ENCODE measurements at regions of chr18 and their contacts with region 1.

Region 1: GRCh38 chr18:12376718-12377555 is at the start of gene AFG3L2:
- DNase-seq: peak; percentile 100
- ATAC-seq: peak; percentile 91
- H3K4me3 Mint-ChIP-seq: peak within 1 kb of the TSS; percentile 92
- H3K27ac Mint-ChIP-seq: peak within 1 kb of the TSS; percentile 88
- H3K4me1 Mint-ChIP-seq: peaks cover 43% of the 10 kb centered on the region
- H3K27me3 Mint-ChIP-seq: no peaks in the 10 kb centered on the region
- total RNA-seq, gene AFG3L2: 38.0 to 56.5 TPM

Region 2: DNA sequence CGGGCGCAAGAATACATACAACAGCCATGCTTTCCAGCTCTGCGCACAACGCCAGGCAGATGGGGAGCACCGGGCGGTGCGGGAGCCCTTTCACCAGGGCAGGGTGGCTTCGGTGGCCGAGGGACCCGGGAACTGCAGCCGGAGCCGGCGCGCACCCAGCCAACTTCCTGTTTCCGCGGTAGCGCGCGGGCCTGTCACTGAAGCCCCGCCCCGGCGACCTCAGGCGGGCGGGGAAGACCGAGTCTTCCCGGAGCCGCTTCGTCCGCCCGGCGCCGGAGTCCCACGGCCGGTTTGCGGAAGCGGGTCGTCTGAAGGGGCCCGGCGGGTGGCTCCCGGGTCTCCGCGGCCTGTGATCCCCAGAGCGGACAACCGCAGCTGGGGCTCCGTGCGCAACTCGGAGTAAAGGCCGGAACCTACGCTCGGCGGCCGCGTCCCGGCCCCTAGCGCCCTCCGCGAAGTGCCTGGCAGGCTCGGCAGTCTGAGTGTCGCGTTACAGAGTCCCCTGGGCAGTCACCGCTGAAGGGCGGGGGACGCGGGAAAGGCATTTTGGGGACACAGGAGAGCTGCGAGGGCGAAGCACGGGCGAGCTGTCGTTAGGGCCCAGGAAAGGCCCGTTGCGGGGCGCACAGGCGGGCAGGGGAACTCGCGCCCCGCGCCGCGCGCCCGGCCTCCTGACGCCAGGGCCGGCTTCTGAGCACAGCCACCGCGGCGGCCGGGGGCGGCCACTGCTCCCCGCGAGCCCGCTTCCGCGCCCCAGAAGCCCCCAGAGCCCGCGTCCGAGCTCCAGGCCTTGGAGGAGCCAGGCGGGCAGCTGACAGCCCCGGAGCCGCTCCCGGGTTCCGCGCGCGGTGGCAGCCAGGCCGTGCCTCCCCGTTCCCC is 468.5 kb before region 1 on chr18 and contains the start of gene MPPE1:
- CTCF ChIA-PET with region 1: no interaction called
- POLR2A ChIA-PET with region 1: no interaction called
- intact Hi-C with region 1: loop called in 1 of 2 experiments (anchors 1 kb)
- DNase-seq: peak; percentile 93
- ATAC-seq: peak; percentile 93
- H3K4me3 Mint-ChIP-seq: peak within 1 kb of the TSS; percentile 88
- H3K27ac Mint-ChIP-seq: peak within 1 kb of the TSS; percentile 94
- H3K4me1 Mint-ChIP-seq: peaks cover 18% of the 10 kb centered on the region
- H3K27me3 Mint-ChIP-seq: no peaks in the 10 kb centered on the region
- total RNA-seq, gene MPPE1: 22.4 to 29.6 TPM

Region 3: GRCh38 chr18:12254136-12254829 is 122.7 kb before region 1 on chr18 and contains the start of gene CIDEA:
- CTCF ChIA-PET with region 1: no interaction called
- POLR2A ChIA-PET with region 1: no interaction called
- intact Hi-C with region 1: no loop called
- DNase-seq: no peak
- ATAC-seq: no peak
- H3K4me3 Mint-ChIP-seq: no peak within 1 kb of the TSS
- H3K27ac Mint-ChIP-seq: no peak within 1 kb of the TSS
- H3K4me1 Mint-ChIP-seq: no peaks in the 10 kb centered on the region
- H3K27me3 Mint-ChIP-seq: peaks cover 51% of the 10 kb centered on the region
- total RNA-seq, gene CIDEA: not detected

Region 4: DNA sequence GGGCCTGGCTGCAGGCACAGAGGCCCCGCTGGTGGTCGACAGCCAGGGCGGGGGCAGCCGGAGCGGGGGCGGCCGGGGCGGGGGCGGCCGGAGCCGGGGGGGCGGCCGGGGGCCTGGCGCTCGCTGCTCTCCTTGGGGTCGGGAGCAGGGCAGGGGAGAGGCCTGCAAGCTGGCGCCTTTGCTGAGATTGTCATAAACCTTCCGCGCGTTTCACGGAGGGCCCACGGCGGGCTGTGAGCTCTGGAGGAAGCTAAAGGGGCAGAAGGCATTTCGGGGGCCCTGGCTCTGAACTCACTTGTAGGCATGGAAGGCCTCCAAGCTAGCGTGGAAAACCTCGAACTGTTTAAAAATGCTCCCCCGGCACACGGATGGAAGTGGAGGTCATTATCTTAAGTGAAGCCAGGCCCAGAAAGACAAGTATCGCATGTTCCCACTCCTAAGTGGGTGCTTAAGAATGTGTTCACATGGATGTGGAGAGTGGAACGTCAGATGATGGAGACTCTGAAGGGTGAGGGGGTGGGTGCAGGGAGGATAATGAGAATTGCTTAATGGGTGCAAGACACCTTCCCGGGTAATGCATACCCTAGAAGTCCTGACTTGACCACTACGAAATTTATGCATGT is 31.4 kb after region 1 on chr18:
- CTCF ChIA-PET with region 1: interaction called, 6 read pairs
- POLR2A ChIA-PET with region 1: interaction called, 3 read pairs
- intact Hi-C with region 1: loop called (anchors 1 to 2 kb)
- DNase-seq: peak; percentile 18
- ATAC-seq: no peak
- H3K4me3 Mint-ChIP-seq: peak overlapping the region; percentile 74
- H3K27ac Mint-ChIP-seq: peak overlapping the region; percentile 31
- H3K4me1 Mint-ChIP-seq: peaks cover 22% of the 10 kb centered on the region
- H3K27me3 Mint-ChIP-seq: peaks cover 29% of the 10 kb centered on the region

Region 5: DNA sequence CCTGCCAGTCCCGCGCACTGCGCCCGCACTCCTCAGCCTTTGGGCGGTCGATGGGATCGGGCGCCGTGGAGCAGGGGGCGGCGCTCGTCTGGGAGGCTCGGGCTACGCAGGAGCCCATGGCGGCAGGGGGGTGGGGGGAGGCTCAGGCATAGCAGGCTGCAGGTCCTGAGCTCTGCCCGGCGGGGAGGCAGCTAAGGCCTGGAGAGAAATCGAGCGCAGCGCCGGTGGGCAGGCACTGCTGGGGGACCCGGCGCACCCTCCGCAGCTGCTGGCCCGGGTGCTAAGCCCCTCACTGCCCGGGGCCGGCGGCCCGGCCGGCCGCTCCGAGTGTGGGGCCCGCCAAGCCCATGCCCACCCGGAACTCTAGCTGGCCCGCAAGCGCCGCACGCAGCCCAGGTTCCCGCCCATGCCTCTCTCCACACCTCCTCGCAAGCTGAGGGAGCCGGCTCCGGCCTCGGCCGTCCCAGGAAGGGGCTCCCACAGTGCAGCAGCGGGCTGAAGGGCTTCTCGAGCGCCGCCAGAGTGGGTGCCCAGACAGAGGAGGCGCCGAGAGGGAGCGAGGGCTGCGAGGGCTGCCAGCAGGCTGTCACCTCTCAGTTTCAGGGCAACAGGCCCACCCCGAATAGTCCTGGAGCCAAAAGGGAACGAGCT is 400.0 kb after region 1 on chr18:
- CTCF ChIA-PET with region 1: no interaction called
- POLR2A ChIA-PET with region 1: no interaction called
- intact Hi-C with region 1: loop called in 1 of 2 experiments (anchors 1 kb)
- DNase-seq: no peak
- ATAC-seq: no peak
- H3K4me3 Mint-ChIP-seq: no peak overlapping the region
- H3K27ac Mint-ChIP-seq: no peak overlapping the region
- H3K4me1 Mint-ChIP-seq: peaks cover 16% of the 10 kb centered on the region
- H3K27me3 Mint-ChIP-seq: no peaks in the 10 kb centered on the region

Region 6: DNA sequence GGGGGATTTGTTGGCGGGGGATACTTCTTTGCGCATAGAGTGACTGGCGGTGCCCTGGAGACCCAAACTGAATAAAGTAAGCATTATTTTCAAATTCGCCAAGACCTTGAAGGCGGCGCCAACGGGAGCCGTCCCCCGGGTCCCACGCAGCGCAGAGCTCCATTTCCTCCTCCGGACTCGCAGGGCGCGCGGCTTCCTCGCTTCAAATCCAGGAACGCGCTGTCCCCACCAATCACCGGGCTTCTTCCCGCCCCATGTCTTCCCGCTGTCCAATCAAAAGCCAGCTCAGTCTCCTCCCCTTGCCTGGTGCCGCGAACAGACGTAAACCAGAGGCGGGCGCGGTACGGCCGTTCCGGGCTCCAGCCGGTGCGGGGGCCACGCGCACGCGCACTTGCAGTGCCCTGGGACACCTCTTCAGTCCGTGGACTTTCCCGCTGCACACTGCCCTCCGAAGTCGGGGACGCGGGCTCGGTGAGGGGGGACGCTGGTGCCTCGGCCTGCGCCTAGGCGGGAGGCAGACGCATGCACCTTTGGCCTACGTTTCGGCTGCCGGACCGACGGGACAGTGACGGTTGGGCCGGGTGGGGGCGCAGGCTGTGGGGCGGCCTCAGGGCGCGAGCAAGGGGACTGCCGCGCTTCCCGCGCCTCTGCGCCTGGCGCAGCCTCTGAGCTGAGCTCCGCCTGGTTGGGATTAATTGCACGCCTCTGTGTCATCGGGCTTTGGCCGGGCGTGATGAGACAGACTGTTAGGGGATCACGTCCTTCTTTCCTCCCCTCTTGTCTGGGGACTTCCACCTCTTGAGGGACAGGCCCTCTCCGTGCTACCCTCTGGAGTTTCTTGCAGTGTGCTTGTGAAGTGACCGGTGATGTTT is 614.3 kb after region 1 on chr18 and contains the start of gene CEP192:
- CTCF ChIA-PET with region 1: no interaction called
- POLR2A ChIA-PET with region 1: interaction called, 6 read pairs
- intact Hi-C with region 1: loop called in 1 of 2 experiments (anchors 1 kb)
- DNase-seq: peak; percentile 98
- ATAC-seq: peak; percentile 90
- H3K4me3 Mint-ChIP-seq: peak within 1 kb of the TSS; percentile 87
- H3K27ac Mint-ChIP-seq: peak within 1 kb of the TSS; percentile 93
- H3K4me1 Mint-ChIP-seq: peaks cover 21% of the 10 kb centered on the region
- H3K27me3 Mint-ChIP-seq: no peaks in the 10 kb centered on the region
- total RNA-seq, gene CEP192: 36.0 to 39.3 TPM

Measured in activated CD4-positive, alpha-beta T cell treated with anti-CD3 and anti-CD28 coated beads for 36 hours (primary cell).